Breast epithelium (tissue), 4 donors: ENCODE measurements at regions of chr14 and their contacts with region 1.

Region 1: GRCh38 chr14:43625294-43625693 is 881.8 kb downstream of the FSCB start:
- DNase-seq: no peak
- H3K4me3 ChIP-seq: no peak overlapping the region
- H3K27ac ChIP-seq: no peak overlapping the region
- H3K4me1 ChIP-seq: no peaks in the 10 kb centered on the region
- H3K27me3 ChIP-seq: no peaks in the 10 kb centered on the region
- CTCF ChIP-seq: no peak
- POLR2A ChIP-seq: no peak

Region 2: DNA sequence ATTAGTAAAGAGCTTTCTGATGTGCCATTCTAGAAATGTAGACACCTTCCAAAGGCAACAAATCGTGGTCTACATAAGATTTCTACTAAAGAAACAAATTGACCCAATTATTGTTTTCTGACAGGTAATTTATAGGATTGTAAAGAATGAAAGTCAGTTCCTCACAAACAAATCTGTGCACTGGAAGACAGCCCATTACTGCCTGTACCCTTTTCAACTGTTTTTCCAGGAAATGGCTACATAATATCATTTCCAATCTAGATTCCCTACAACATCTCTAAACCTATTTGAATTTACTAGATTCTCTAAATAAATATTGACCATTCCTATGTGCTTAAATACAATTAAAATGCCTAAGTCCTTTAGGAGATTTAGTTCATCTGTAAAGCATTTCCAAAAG is 57.3 kb before region 1 on chr14:
- intact Hi-C with region 1: no loop called
- DNase-seq: no peak
- H3K4me3 ChIP-seq: no peak overlapping the region
- H3K27ac ChIP-seq: no peak overlapping the region
- H3K4me1 ChIP-seq: no peaks in the 10 kb centered on the region
- H3K27me3 ChIP-seq: no peaks in the 10 kb centered on the region
- CTCF ChIP-seq: no peak
- POLR2A ChIP-seq: no peak

Region 3: DNA sequence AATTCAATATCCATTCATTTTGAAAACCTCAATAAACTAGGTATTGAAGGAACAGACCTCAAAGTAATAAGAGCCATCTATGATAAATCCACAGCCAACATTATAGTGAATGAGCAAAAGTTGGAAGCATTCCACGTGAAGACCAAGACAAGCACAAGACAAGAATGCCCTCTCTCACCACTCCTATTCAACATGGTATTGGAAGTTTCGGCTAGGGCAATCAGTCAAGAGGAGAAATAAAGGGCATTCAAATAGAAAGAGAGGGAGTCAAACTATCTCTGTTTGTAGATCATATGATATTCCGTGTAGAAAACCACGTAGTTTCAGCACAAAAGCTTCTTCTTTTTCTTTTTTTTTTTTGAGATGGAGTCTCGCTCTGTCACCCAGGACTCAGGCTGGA is 331.4 kb after region 1 on chr14:
- intact Hi-C with region 1: loop called (anchors 10 kb)
- DNase-seq: no peak
- H3K4me3 ChIP-seq: no peak overlapping the region
- H3K27ac ChIP-seq: no peak overlapping the region
- H3K4me1 ChIP-seq: no peaks in the 10 kb centered on the region
- H3K27me3 ChIP-seq: no peaks in the 10 kb centered on the region
- CTCF ChIP-seq: no peak
- POLR2A ChIP-seq: no peak

Region 4: DNA sequence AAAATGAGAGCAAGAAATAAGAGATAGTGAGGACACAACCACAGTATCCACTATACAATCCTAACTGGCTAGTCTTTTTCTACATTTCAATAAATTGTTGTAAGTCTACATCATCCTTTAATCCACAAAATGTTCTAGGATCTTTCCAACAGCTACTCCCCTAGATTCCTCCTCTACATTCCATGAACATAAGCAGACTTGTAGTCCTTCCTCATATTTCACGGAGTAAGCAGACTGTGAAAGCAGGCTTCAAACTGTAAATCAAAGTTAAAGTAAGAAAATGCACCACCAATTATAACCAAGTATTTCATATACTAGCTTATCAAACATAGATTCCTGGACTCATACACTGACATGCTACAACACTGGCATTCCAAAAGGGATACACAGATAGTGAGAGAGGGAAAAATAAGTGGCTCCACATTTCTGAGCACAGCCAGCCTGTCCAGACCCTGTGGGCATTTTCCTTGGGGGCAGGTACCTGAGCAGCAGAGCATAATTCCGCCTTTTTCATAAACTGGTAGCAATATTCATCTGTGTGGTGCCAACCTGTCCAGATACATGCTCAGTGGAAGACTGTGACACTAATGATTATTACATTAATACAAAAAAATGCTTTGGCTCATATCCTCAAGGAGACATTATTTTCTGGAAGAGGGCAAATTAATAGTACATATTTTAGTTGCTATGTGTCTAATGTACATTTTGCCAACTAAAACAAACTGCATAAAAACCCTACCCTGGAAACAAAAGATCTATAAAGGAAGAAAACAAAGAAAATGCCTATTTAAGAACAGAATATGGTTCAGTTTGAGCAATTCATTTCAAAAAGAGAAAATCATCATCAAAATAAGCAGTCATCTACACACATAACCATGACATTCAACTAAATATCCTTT is 995.1 kb after region 1 on chr14:
- intact Hi-C with region 1: no loop called
- DNase-seq: no peak
- H3K4me3 ChIP-seq: no peak overlapping the region
- H3K27ac ChIP-seq: no peak overlapping the region
- H3K4me1 ChIP-seq: no peaks in the 10 kb centered on the region
- H3K27me3 ChIP-seq: no peaks in the 10 kb centered on the region
- CTCF ChIP-seq: no peak
- POLR2A ChIP-seq: no peak